Activated CD4-positive, alpha-beta T cell treated with anti-CD3 and anti-CD28 coated beads for 36 hours (primary cell): ENCODE measurements at regions of chr7 and their contacts with region 1.

Region 1: GRCh38 chr7:147771344-147771743 is 819.2 kb upstream of the C7orf33 start:
- DNase-seq: no peak
- ATAC-seq: no peak
- H3K4me3 Mint-ChIP-seq: no peak overlapping the region
- H3K27ac Mint-ChIP-seq: no peak overlapping the region
- H3K4me1 Mint-ChIP-seq: no peaks in the 10 kb centered on the region
- H3K27me3 Mint-ChIP-seq: no peaks in the 10 kb centered on the region

Region 2: DNA sequence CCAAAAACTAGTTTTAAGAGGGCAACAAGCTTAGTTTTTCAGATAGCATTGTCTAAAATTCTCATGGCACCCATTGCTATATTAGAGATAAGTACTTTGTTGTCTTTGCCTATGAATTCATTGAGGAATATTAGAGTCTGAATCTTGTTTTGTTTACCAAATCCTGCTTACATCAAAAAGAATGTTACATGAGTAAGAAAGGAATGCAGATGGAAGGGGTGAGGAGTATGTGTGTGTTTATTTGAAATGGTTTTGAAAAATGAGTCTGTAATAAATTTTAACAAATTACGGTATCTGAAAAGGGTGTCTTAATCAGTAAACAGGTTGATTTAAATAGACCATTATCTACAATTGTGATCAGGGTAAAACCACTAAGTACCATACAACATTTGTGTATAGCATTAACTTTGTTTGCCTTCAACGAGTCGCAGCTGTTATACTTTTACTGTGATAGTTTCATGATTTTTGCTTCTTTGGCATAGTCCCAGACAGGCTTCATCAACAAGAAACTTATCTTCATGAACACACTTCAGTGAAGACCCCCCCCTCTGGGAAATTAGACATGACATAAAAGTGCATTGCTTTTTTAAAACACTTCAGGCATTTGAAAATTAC is 364.7 kb before region 1 on chr7:
- CTCF ChIA-PET with region 1: no interaction called
- POLR2A ChIA-PET with region 1: no interaction called
- intact Hi-C with region 1: loop called in 1 of 2 experiments (anchors 5 kb)
- DNase-seq: no peak
- ATAC-seq: no peak
- H3K4me3 Mint-ChIP-seq: no peak overlapping the region
- H3K27ac Mint-ChIP-seq: no peak overlapping the region
- H3K4me1 Mint-ChIP-seq: no peaks in the 10 kb centered on the region
- H3K27me3 Mint-ChIP-seq: no peaks in the 10 kb centered on the region